ENCODE measurements at regions of chr1 and their contacts with region 1.

Region 1: DNA sequence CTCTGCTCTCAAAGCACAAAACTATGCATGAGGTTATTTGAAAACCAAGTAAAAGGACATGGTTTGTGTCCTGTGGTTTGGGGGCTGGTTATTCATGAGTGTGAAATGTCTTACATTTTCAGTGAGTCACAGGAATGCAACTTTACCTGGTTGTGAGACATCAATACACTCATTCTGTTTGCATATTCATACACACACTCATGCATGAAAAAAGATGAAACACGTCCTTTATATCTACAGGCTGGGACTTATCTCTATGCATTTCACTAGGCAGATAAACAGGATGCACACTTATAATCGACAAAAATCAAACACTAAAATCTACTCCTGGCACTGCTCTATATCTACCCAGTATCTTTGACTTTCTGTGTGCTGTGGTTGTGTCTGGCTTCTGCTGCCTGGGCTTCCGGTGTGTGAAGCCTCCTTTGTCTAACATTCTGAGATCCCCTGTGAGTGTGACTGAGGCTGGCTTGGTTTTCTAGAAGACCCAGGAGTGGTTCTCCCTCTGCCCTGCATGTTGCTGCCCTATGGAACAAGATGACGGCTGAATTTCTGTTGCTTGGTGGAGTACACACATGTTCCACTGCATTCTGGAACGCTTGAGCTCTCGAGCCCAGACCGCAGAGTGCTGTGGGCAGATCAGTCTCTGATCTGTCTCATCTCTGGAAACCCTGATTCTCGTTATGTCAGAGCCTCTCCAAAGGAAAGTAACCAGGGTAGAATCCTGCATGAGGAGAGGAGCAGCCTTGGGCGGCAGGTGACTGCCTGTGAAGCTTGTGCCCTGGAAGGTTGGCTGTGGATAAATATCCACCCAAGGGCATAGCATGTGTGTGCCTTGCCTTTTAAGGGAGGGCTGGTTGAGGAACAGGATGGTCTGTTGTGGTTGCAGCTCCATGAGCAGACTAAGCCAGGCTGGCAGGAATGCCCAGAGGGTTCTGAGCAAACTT is 19.7 kb upstream of the FASLG start:
- DNase-seq: peak; percentile 91
- ATAC-seq: peak; percentile 83
- H3K4me3 Mint-ChIP-seq: peak overlapping the region; percentile 56
- H3K27ac Mint-ChIP-seq: peak overlapping the region; percentile 99
- H3K4me1 Mint-ChIP-seq: peaks cover 73% of the 10 kb centered on the region
- H3K27me3 Mint-ChIP-seq: peaks cover 22% of the 10 kb centered on the region

Region 2: DNA sequence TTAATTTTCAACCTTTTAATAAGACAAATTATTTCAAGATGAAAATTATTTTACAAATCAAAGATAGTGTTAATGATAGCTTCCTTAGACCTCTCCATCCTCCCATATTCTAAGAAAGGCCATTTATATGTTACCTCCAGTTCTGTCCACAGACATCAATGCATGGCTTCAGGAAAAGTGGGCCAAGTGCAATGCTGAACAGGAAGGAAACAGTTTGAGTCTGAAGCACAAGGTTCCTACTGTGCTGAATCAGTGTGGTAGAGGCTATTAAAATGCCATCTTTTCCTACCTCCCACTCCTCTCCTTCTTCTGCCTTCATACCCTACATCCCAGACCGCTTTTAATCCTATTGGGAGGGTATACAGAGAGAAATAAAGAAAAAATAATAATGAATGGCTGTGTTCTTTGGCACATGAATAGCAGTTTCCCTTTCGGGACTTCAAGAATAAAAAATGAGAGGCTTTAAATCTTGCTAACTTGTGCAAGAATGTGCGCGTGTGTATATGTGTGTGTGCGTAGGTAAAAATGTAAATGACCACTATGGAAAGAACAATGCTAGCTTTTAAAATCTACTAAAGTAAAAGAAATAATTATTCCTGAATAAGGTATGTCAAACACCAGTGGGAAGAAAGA is 281.3 kb before region 1 on chr1:
- CTCF ChIA-PET with region 1: interaction called, 3 read pairs
- POLR2A ChIA-PET with region 1: no interaction called
- intact Hi-C with region 1: loop called in 1 of 2 experiments (anchors 1 kb)
- DNase-seq: no peak
- ATAC-seq: peak; percentile 6
- H3K4me3 Mint-ChIP-seq: peak overlapping the region; percentile 39
- H3K27ac Mint-ChIP-seq: peak overlapping the region; percentile 34
- H3K4me1 Mint-ChIP-seq: peaks cover 62% of the 10 kb centered on the region
- H3K27me3 Mint-ChIP-seq: peaks cover 2% of the 10 kb centered on the region

Region 3: GRCh38 chr1:172449585-172450534 is 189.3 kb before region 1 on chr1:
- CTCF ChIA-PET with region 1: no interaction called
- POLR2A ChIA-PET with region 1: no interaction called
- intact Hi-C with region 1: no loop called
- DNase-seq: peak; percentile 57
- ATAC-seq: peak; percentile 78
- H3K4me3 Mint-ChIP-seq: no peak overlapping the region
- H3K27ac Mint-ChIP-seq: no peak overlapping the region
- H3K4me1 Mint-ChIP-seq: peaks cover 23% of the 10 kb centered on the region
- H3K27me3 Mint-ChIP-seq: no peaks in the 10 kb centered on the region

Region 4: DNA sequence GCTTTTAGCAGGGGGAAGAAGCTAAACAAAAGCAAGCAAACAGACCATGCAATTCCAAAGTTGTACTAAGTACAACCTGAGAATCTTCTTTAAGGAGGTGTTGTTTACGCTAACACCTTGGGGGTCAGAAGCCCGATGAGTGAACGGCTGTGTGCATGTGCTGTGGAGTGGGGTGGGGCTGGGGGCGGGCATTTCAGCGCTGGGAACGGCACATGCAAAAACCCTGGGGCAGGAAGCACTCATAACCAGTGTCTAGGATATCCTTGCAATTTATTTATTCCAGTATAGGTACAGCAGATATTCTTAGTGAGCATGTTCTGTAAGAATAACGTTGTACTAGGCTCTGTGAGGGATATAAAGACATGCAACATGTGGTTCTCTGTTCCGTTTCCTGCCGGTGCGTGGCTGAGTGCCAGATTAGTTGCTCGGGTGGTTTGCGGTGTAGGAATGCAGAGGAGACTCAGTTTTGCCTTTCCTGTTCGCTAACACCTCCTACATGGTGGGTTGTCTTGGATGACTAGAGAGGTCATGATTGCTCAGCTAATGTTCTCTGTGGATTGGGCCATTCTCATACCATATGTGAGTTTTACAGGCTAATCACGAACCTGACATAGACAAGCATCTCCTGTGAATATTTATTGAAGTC is 23.4 kb after region 1 on chr1:
- CTCF ChIA-PET with region 1: interaction called, 28 read pairs
- POLR2A ChIA-PET with region 1: interaction called, 4 read pairs
- intact Hi-C with region 1: loop called (anchors 1 kb)
- DNase-seq: peak; percentile 95
- ATAC-seq: peak; percentile 82
- H3K4me3 Mint-ChIP-seq: peak overlapping the region; percentile 78
- H3K27ac Mint-ChIP-seq: peak overlapping the region; percentile 57
- H3K4me1 Mint-ChIP-seq: peaks cover 74% of the 10 kb centered on the region
- H3K27me3 Mint-ChIP-seq: peaks cover 17% of the 10 kb centered on the region

Region 5: DNA sequence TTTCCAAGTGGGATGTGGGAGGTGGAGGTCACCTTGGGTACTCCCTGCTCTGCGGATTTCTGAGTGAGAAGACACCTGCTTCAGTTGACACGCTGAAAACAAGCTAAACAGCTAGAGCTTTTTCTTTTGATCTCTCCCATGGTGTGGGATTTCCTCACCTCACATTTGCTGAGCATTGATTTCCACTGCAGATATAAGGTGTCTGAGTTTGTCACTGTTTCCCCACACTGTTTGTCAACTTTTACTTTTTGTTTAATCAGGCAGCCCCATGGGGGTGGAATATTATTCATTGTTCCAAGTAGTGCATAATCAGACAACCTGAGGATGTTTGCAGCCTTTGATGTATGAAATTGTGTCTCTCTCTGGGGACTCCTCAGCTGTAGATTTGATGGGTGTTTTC is 69.3 kb after region 1 on chr1:
- CTCF ChIA-PET with region 1: interaction called, 7 read pairs
- POLR2A ChIA-PET with region 1: interaction called, 6 read pairs
- intact Hi-C with region 1: loop called (anchors 1 to 2 kb)
- DNase-seq: peak; percentile 56
- ATAC-seq: peak; percentile 86
- H3K4me3 Mint-ChIP-seq: peak overlapping the region; percentile 37
- H3K27ac Mint-ChIP-seq: peak overlapping the region; percentile 47
- H3K4me1 Mint-ChIP-seq: peaks cover 13% of the 10 kb centered on the region
- H3K27me3 Mint-ChIP-seq: peaks cover 16% of the 10 kb centered on the region

Region 6: DNA sequence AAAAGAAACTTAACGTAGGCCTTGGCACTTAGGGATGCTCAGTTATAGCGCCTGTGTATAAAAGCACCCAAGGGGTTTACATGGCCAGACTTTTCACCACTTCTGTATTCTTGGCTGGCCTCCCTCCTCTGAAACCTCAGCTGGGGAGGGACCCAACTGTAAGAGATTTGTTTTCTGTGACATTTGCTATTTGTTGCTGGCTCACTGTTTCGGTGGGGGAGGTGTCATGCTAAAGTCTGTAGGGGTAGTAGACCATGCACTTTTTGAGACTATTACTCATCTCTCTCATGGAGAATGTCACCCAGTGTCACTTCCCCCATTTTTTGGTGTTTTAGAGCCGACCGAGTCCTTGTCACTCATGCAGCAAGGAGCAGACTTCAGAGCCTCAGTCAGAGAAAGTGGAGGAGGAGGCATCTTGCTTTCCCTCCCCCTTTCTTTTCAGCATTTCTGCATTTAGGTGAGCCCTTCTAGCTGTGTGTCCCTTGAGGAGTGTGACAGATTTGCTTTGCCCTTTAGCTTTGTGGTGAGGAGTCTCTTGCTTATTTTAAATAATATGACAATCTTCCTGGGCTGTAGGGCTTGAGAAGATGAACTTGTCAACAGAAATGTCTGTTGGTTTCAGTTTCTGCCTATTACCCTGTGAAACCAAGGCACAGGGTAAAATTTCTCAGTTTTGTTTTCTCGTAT is 179.8 kb after region 1 on chr1:
- CTCF ChIA-PET with region 1: no interaction called
- POLR2A ChIA-PET with region 1: no interaction called
- intact Hi-C with region 1: loop called in 1 of 2 experiments (anchors 1 kb)
- DNase-seq: peak; percentile 70
- ATAC-seq: peak; percentile 96
- H3K4me3 Mint-ChIP-seq: peak overlapping the region; percentile 3
- H3K27ac Mint-ChIP-seq: peak overlapping the region; percentile 38
- H3K4me1 Mint-ChIP-seq: peaks cover 33% of the 10 kb centered on the region
- H3K27me3 Mint-ChIP-seq: peaks cover 15% of the 10 kb centered on the region

Region 7: GRCh38 chr1:173297798-173298391 is 658.7 kb after region 1 on chr1:
- CTCF ChIA-PET with region 1: no interaction called
- POLR2A ChIA-PET with region 1: no interaction called
- intact Hi-C with region 1: loop called in 1 of 2 experiments (anchors 5 kb)
- DNase-seq: peak; percentile 67
- ATAC-seq: peak; percentile 94
- H3K4me3 Mint-ChIP-seq: no peak overlapping the region
- H3K27ac Mint-ChIP-seq: no peak overlapping the region
- H3K4me1 Mint-ChIP-seq: peaks cover 27% of the 10 kb centered on the region
- H3K27me3 Mint-ChIP-seq: peaks cover 6% of the 10 kb centered on the region

Measured in activated CD4-positive, alpha-beta T cell treated with anti-CD3 and anti-CD28 coated beads for 36 hours (primary cell).